Natural killer cell (primary cell): ENCODE measurements at regions of chr20 and their contacts with region 1.

Region 1: GRCh38 chr20:32674362-32674789 is 635 bp upstream of the C20orf203 start:
- DNase-seq: peak; percentile 44 to 84
- ATAC-seq: peak in 2 of 3 donors; percentile 52 to 53
- H3K4me3 ChIP-seq: no peak overlapping the region
- H3K4me3 Mint-ChIP-seq: peak overlapping the region; percentile 35
- H3K27ac ChIP-seq: no peak overlapping the region
- H3K27ac Mint-ChIP-seq: peak overlapping the region in 1 of 2 donors; percentile 49
- H3K4me1 ChIP-seq: peaks cover 34% of the 10 kb centered on the region
- H3K4me1 Mint-ChIP-seq: peaks cover 18 to 33% of the 10 kb centered on the region in 2 donors
- H3K27me3 ChIP-seq: no peaks in the 10 kb centered on the region
- H3K27me3 Mint-ChIP-seq: no peaks in the 10 kb centered on the region
- CTCF ChIP-seq: peak; percentile 68

Region 2: GRCh38 chr20:32779500-32780211 is 105.3 kb after region 1 on chr20:
- intact Hi-C with region 1: loop called (anchors 1 kb)
- DNase-seq: no peak
- ATAC-seq: no peak
- H3K4me3 ChIP-seq: no peak overlapping the region
- H3K4me3 Mint-ChIP-seq: no peak overlapping the region
- H3K27ac ChIP-seq: no peak overlapping the region
- H3K27ac Mint-ChIP-seq: no peak overlapping the region
- H3K4me1 ChIP-seq: peaks cover 3% of the 10 kb centered on the region
- H3K4me1 Mint-ChIP-seq: peaks cover 0 to 9% of the 10 kb centered on the region in 2 donors
- H3K27me3 ChIP-seq: no peaks in the 10 kb centered on the region
- H3K27me3 Mint-ChIP-seq: no peaks in the 10 kb centered on the region
- CTCF ChIP-seq: no peak

Region 3: GRCh38 chr20:32877507-32877906 is 203.1 kb after region 1 on chr20:
- intact Hi-C with region 1: no loop called
- DNase-seq: no peak
- ATAC-seq: no peak
- H3K4me3 ChIP-seq: no peak overlapping the region
- H3K4me3 Mint-ChIP-seq: no peak overlapping the region
- H3K27ac ChIP-seq: no peak overlapping the region
- H3K27ac Mint-ChIP-seq: no peak overlapping the region
- H3K4me1 ChIP-seq: no peaks in the 10 kb centered on the region
- H3K4me1 Mint-ChIP-seq: no peaks in the 10 kb centered on the region
- H3K27me3 ChIP-seq: no peaks in the 10 kb centered on the region
- H3K27me3 Mint-ChIP-seq: no peaks in the 10 kb centered on the region
- CTCF ChIP-seq: no peak

Region 4: DNA sequence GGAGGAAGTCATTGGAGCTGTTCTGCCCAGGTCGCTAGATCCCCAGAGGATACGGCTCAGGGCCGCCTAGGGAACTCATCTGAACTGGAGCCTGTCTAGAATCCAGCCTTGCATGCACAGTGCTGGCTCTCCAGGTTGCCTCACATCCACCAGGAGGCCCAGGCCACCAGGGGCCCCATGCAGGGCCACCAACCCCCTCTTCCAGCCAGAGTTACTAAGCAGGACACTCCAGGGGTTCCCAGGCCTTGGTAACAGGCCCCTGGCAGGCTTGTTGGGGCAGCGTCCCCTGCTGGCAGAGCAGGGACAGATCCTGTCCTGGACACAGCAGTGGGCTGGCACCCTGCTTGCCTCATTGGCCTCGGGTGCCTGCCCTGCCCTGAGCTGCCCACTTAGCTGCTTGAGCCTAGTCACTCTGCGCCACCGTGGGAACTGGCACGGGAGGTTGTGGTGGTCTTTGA is 219.7 kb after region 1 on chr20:
- intact Hi-C with region 1: no loop called
- DNase-seq: no peak
- ATAC-seq: peak in 1 of 3 donors; percentile 33
- H3K4me3 ChIP-seq: no peak overlapping the region
- H3K4me3 Mint-ChIP-seq: no peak overlapping the region
- H3K27ac ChIP-seq: no peak overlapping the region
- H3K27ac Mint-ChIP-seq: no peak overlapping the region
- H3K4me1 ChIP-seq: peaks cover 5% of the 10 kb centered on the region
- H3K4me1 Mint-ChIP-seq: peaks cover 0 to 7% of the 10 kb centered on the region in 2 donors
- H3K27me3 ChIP-seq: no peaks in the 10 kb centered on the region
- H3K27me3 Mint-ChIP-seq: no peaks in the 10 kb centered on the region
- CTCF ChIP-seq: no peak